ENCODE measurements at regions of chr10 and their contacts with region 1.

Region 1: GRCh38 chr10:102743588-102744373 is at the start of gene WBP1L:
- DNase-seq: peak; percentile 99
- H3K4me3 Mint-ChIP-seq: peak within 1 kb of the TSS; percentile 91
- H3K27ac Mint-ChIP-seq: peak within 1 kb of the TSS; percentile 97
- H3K4me1 Mint-ChIP-seq: peaks cover 24% of the 10 kb centered on the region
- H3K27me3 Mint-ChIP-seq: no peaks in the 10 kb centered on the region
- CTCF ChIP-seq: no peak
- total RNA-seq, gene WBP1L: 19.8 and 24.8 TPM in 2 replicates

Region 2: GRCh38 chr10:102615361-102615760 is 128.4 kb before region 1 on chr10:
- CTCF ChIA-PET with region 1: no interaction called
- POLR2A ChIA-PET with region 1: no interaction called
- intact Hi-C with region 1: no loop called
- DNase-seq: peak; percentile 25
- H3K4me3 Mint-ChIP-seq: no peak overlapping the region
- H3K27ac Mint-ChIP-seq: no peak overlapping the region
- H3K4me1 Mint-ChIP-seq: peaks cover 3% of the 10 kb centered on the region
- H3K27me3 Mint-ChIP-seq: no peaks in the 10 kb centered on the region
- CTCF ChIP-seq: peak; percentile 31

Region 3: GRCh38 chr10:102764389-102765178 is 20.8 kb after region 1 on chr10:
- CTCF ChIA-PET with region 1: interaction called, 3 read pairs
- POLR2A ChIA-PET with region 1: interaction called, 35 read pairs
- intact Hi-C with region 1: no loop called
- DNase-seq: peak; percentile 43
- H3K4me3 Mint-ChIP-seq: no peak overlapping the region
- H3K27ac Mint-ChIP-seq: peak overlapping the region; percentile 42
- H3K4me1 Mint-ChIP-seq: peaks cover 24% of the 10 kb centered on the region
- H3K27me3 Mint-ChIP-seq: no peaks in the 10 kb centered on the region
- CTCF ChIP-seq: no peak

Region 4: GRCh38 chr10:102776779-102777456 is 33.1 kb after region 1 on chr10:
- CTCF ChIA-PET with region 1: interaction called, 4 read pairs
- POLR2A ChIA-PET with region 1: interaction called, 35 read pairs
- intact Hi-C with region 1: loop called (anchors 5 kb)
- DNase-seq: peak; percentile 94
- H3K4me3 Mint-ChIP-seq: peak overlapping the region; percentile 64
- H3K27ac Mint-ChIP-seq: peak overlapping the region; percentile 64
- H3K4me1 Mint-ChIP-seq: peaks cover 41% of the 10 kb centered on the region
- H3K27me3 Mint-ChIP-seq: no peaks in the 10 kb centered on the region
- CTCF ChIP-seq: no peak

Region 5: DNA sequence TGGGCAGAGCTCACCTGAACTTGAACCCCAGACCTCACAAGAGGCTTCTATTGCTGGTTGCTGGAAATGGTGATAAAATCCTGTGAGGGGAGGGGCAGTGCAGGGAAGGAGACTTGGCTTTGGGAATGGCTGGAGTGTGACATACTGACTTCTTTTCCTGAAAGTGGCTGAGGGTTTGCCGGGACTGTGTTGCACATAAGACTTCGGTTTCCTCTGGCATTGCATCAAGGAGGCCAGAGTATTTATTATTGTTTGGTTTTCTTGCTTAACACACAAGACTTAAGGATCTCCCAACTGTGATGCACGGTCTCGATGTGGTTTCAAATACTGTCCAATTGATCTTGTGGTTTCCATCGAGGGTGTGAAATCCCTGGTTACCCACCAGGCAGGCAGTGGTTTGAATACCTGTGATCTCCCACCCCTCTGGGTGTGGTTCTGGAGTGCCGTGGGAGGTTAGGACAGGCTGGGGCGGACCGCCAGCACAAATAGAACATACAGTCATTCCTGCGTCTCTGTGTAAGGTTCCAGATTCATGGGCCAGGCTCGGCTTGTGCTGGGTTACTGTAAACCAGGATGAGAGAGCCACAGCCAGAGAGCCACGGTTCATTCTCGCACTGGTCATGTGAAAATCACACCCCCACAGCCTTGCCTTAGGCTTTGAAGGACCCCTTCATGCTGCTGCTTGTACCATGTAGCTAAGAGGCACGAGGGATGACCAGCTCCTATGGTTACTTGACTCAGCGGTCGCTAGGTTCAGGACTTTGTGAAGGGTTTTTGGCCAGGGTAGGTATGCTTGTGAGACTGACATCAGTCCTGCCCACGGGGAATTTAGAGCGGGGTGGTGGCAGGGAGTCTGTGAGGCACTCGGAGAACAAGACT is 39.1 kb after region 1 on chr10:
- CTCF ChIA-PET with region 1: interaction called, 3 read pairs
- POLR2A ChIA-PET with region 1: interaction called, 22 read pairs
- intact Hi-C with region 1: loop called (anchors 5 kb)
- DNase-seq: peak; percentile 96
- H3K4me3 Mint-ChIP-seq: peak overlapping the region; percentile 64
- H3K27ac Mint-ChIP-seq: peak overlapping the region; percentile 89
- H3K4me1 Mint-ChIP-seq: peaks cover 47% of the 10 kb centered on the region
- H3K27me3 Mint-ChIP-seq: no peaks in the 10 kb centered on the region
- CTCF ChIP-seq: no peak

Region 6: GRCh38 chr10:103069453-103070331 is 325.9 kb after region 1 on chr10:
- CTCF ChIA-PET with region 1: no interaction called
- POLR2A ChIA-PET with region 1: no interaction called
- intact Hi-C with region 1: no loop called
- DNase-seq: peak; percentile 59
- H3K4me3 Mint-ChIP-seq: no peak overlapping the region
- H3K27ac Mint-ChIP-seq: no peak overlapping the region
- H3K4me1 Mint-ChIP-seq: no peaks in the 10 kb centered on the region
- H3K27me3 Mint-ChIP-seq: no peaks in the 10 kb centered on the region
- CTCF ChIP-seq: peak; percentile 72